Pancreas (tissue), 10 donors: ENCODE measurements at regions of chr12 and their contacts with region 1.

Region 1: GRCh38 chr12:109385339-109386067 is 37.8 kb downstream of the MYO1H start:
- DNase-seq: no peak
- ATAC-seq: peak; percentile 56 to 72 (median 72)
- H3K4me3 ChIP-seq: no peak overlapping the region
- H3K27ac ChIP-seq: no peak overlapping the region
- H3K4me1 ChIP-seq: no peaks in the 10 kb centered on the region
- H3K27me3 ChIP-seq: peaks cover 0 to 7% (median 0%) of the 10 kb centered on the region in 4 donors
- CTCF ChIP-seq: peak in 1 of 4 donors; percentile 11

Region 2: GRCh38 chr12:109264095-109264942 is 121.2 kb before region 1 on chr12:
- intact Hi-C with region 1: loop called in 2 of 3 experiments (anchors 5 to 10 kb)
- DNase-seq: peak; percentile 45 to 86 (median 68)
- ATAC-seq: peak; percentile 26 to 91 (median 82)
- H3K4me3 ChIP-seq: no peak overlapping the region
- H3K27ac ChIP-seq: no peak overlapping the region
- H3K4me1 ChIP-seq: no peaks in the 10 kb centered on the region
- H3K27me3 ChIP-seq: no peaks in the 10 kb centered on the region
- CTCF ChIP-seq: peak; percentile 24 to 53 (median 39)

Region 3: GRCh38 chr12:109612975-109613502 is 227.5 kb after region 1 on chr12:
- intact Hi-C with region 1: no loop called
- DNase-seq: no peak
- ATAC-seq: no peak
- H3K4me3 ChIP-seq: no peak overlapping the region
- H3K27ac ChIP-seq: no peak overlapping the region
- H3K4me1 ChIP-seq: peaks cover 0 to 6% (median 0%) of the 10 kb centered on the region in 3 donors
- H3K27me3 ChIP-seq: no peaks in the 10 kb centered on the region
- CTCF ChIP-seq: no peak

Region 4: GRCh38 chr12:109642506-109643132 is 257.1 kb after region 1 on chr12:
- intact Hi-C with region 1: no loop called
- DNase-seq: no peak
- ATAC-seq: no peak
- H3K4me3 ChIP-seq: no peak overlapping the region
- H3K27ac ChIP-seq: no peak overlapping the region
- H3K4me1 ChIP-seq: no peaks in the 10 kb centered on the region
- H3K27me3 ChIP-seq: no peaks in the 10 kb centered on the region
- CTCF ChIP-seq: no peak